GM12878 (cell line): ENCODE measurements at regions of chr10 and their contacts with region 1.

Region 1: DNA sequence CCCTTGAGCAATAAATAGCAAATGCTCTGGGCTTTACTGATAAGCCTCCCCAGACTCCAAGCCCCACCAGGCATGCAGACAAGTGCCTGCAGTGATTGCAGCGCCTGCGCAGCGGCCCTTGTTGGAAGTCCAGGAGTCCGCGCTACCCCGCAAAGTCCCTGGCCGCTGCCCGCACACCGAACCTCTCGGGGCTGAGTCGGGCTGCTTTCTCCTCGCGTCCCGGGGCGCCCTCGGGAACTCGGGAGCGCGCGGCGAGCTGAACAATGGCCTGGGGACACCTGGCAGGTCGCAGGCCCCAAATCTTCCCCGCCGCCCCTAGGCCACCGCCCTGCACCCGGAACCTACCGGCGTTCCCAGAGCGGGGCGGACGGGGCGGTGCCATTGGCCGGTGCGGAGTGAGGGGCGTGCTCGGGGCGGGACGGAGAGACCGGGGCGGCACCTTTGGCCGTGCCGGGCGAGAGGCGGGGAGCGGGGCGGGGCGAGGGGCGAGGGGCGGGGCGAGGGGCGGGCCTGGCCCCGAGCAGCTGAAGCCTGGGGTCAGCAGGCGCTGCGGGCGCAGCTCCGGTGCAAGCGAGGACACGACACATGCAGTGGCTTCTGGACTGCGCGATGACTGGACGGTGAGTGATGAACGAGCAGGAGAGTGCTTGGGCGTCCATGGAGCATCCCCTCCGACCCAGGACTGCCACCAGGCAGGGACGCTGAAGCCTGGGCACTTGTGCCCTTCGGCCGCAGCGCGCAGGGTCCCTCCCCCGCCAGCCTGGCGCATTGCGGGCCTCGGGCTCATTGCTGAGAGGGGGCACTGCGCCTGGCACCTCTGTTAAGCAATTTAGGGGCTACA is at the start of gene RASSF4:
- DNase-seq: no peak
- ATAC-seq: peak; percentile 92
- H3K4me3 ChIP-seq: peak within 1 kb of the TSS; percentile 92
- H3K27ac ChIP-seq: peak within 1 kb of the TSS; percentile 71
- H3K4me1 ChIP-seq: peaks cover 43% of the 10 kb centered on the region
- H3K27me3 ChIP-seq: no peaks in the 10 kb centered on the region
- CTCF ChIP-seq: no peak
- EP300 ChIP-seq: no peak
- POLR2A ChIP-seq: peak; percentile 98
- RAD21 ChIP-seq: no peak
- polyA plus RNA-seq, gene RASSF4: 3.7 to 4.0 TPM

Region 2: GRCh38 chr10:43145311-43145710 is 1814.2 kb before region 1 on chr10:
- CTCF ChIA-PET with region 1: no interaction called
- POLR2A ChIA-PET with region 1: no interaction called
- RAD21 ChIA-PET with region 1: no interaction called
- SMC1A ChIA-PET with region 1: no interaction called
- in situ Hi-C with region 1: loop called (anchors 25 kb)
- intact Hi-C with region 1: loop called (anchors 10 kb)
- DNase-seq: no peak
- ATAC-seq: peak; percentile 5; the same call in 1 of the 3 replicates
- H3K4me3 ChIP-seq: no peak overlapping the region
- H3K27ac ChIP-seq: no peak overlapping the region
- H3K4me1 ChIP-seq: peaks cover 13% of the 10 kb centered on the region
- H3K27me3 ChIP-seq: no peaks in the 10 kb centered on the region
- CTCF ChIP-seq: no peak
- EP300 ChIP-seq: no peak
- POLR2A ChIP-seq: no peak
- RAD21 ChIP-seq: no peak

Region 3: DNA sequence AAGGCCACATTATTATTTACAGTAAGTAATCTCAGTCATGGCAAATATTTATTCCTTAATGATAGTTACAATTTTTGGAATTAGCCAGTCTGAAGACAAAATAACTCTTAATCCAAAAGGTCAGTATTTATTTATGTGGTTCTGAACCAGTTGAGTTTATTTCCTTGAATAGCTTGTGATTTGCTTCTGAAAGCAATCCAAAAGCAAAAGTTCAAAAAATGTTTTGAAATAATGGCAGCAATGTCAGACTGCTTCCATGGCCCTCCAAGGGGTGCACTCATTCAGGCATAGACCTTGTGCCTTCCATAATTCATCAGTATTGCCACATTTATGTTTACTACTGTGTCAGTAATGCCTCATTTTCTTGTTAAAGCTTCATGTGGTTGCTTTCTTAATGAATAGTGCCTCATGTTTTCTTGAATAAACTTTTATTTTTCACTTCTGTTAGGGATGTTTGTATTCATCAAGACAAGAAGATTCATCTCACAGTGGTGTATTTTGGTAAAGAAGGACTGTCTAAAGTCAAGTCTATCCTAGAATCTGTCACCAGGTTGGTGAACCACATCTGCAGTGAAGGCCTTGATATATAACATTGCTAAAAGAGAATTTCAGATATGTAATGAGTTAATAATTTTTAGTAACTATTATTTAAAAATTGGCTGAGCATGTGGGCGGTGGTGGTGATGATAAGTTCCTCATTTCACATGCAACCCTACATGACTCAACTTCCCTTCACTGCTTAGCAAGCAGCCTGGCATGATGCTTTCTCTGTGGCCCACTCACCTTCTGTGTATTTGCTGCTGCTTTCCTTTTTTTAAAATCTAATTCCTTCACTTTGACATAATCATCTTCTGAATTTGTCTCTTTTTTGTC is 1799.2 kb before region 1 on chr10:
- CTCF ChIA-PET with region 1: no interaction called
- POLR2A ChIA-PET with region 1: no interaction called
- RAD21 ChIA-PET with region 1: no interaction called
- SMC1A ChIA-PET with region 1: no interaction called
- in situ Hi-C with region 1: loop called (anchors 25 kb)
- intact Hi-C with region 1: no loop called
- DNase-seq: no peak
- ATAC-seq: peak; percentile 75
- H3K4me3 ChIP-seq: no peak overlapping the region
- H3K27ac ChIP-seq: no peak overlapping the region; the same call in 1 of the 2 replicates
- H3K4me1 ChIP-seq: no peaks in the 10 kb centered on the region; the same call in 1 of the 2 replicates
- H3K27me3 ChIP-seq: no peaks in the 10 kb centered on the region
- CTCF ChIP-seq: no peak
- EP300 ChIP-seq: no peak
- POLR2A ChIP-seq: no peak
- RAD21 ChIP-seq: no peak

Region 4: DNA sequence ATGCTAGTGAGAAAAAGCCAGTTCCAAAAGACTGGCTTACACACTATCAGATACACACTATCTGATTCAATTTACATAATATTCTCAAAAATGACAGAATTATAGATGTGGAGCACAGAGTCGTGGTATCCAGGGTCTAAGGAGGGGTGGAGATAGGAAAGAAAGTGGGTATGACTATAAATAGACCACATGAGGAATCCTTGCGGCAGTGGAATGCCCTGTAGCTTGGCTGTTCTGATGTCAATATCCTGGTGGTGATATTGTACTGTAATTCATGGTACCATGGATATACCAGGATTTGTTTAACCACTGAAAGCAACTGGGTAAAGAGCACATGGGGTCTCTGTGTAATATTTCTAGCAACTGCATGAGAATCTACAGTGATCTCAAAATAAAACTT is 116.0 kb before region 1 on chr10:
- CTCF ChIA-PET with region 1: no interaction called
- POLR2A ChIA-PET with region 1: no interaction called
- RAD21 ChIA-PET with region 1: no interaction called
- SMC1A ChIA-PET with region 1: no interaction called
- in situ Hi-C with region 1: no loop called
- intact Hi-C with region 1: no loop called
- DNase-seq: no peak
- ATAC-seq: no peak
- H3K4me3 ChIP-seq: no peak overlapping the region
- H3K27ac ChIP-seq: no peak overlapping the region
- H3K4me1 ChIP-seq: no peaks in the 10 kb centered on the region
- H3K27me3 ChIP-seq: no peaks in the 10 kb centered on the region; a peak in 3 of 4 replicates
- CTCF ChIP-seq: no peak
- EP300 ChIP-seq: no peak
- POLR2A ChIP-seq: no peak
- RAD21 ChIP-seq: no peak

Region 5: DNA sequence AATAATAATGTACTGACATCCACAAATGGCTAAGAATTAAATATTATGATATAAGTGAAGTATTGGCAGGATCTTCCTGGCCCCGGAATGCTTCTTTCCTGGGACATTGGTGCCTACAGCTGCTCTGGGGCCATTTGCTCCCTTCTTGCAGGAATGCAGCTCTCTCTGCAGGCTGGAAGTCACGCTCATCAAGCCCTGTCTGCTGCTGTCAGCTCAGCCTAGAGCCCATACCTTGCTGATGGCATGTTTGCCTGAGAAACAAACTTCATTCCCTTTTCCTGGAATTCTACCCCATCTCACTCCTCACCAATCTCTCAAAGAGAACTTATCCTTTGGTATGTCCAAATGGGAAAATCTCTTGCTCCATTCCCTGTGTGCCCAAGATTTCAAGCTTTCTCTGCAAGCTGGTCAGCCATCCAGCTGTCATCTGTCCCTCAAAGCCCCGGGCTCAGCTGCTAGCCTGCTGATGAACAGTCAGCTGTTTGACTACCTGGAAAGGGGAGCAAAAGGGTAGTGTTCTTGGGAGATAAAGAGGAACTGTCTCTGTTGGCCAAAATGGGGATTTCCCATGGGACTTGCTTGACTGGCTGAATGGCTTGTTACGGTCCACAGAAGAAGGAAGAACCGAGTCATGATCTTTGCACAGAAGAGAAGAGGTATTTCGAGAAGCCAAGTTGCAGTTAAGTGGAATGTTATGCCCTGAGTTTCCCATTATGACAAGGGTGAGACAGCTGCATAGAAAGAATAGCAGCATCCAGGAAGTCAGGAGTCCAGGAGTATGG is 11.9 kb before region 1 on chr10:
- CTCF ChIA-PET with region 1: interaction called, 80 read pairs
- POLR2A ChIA-PET with region 1: interaction called, 174 read pairs
- RAD21 ChIA-PET with region 1: interaction called, 60 read pairs
- SMC1A ChIA-PET with region 1: interaction called, 147 read pairs
- in situ Hi-C with region 1: no loop called
- intact Hi-C with region 1: loop called (anchors 1 kb)
- DNase-seq: peak; percentile 80
- ATAC-seq: peak; percentile 79
- H3K4me3 ChIP-seq: peak overlapping the region; percentile 16; the same call in 1 of the 2 replicates
- H3K27ac ChIP-seq: peak overlapping the region; percentile 67
- H3K4me1 ChIP-seq: peaks cover 51% of the 10 kb centered on the region
- H3K27me3 ChIP-seq: no peaks in the 10 kb centered on the region
- CTCF ChIP-seq: no peak
- EP300 ChIP-seq: no peak
- POLR2A ChIP-seq: no peak
- RAD21 ChIP-seq: no peak

Region 6: GRCh38 chr10:44974628-44975431 is 15.4 kb after region 1 on chr10:
- CTCF ChIA-PET with region 1: interaction called, 16 read pairs
- POLR2A ChIA-PET with region 1: interaction called, 110 read pairs
- RAD21 ChIA-PET with region 1: interaction called, 124 read pairs
- SMC1A ChIA-PET with region 1: interaction called, 28 read pairs
- in situ Hi-C with region 1: no loop called
- intact Hi-C with region 1: loop called (anchors 2 kb)
- DNase-seq: no peak
- ATAC-seq: peak; percentile 86
- H3K4me3 ChIP-seq: peak overlapping the region; percentile 67; the same call in 1 of the 2 replicates
- H3K27ac ChIP-seq: peak overlapping the region; percentile 80
- H3K4me1 ChIP-seq: peaks cover 50% of the 10 kb centered on the region
- H3K27me3 ChIP-seq: no peaks in the 10 kb centered on the region
- CTCF ChIP-seq: peak; percentile 78 to 95 (median 94); a peak in 5 of 6 replicates
- EP300 ChIP-seq: 0 out of 4 replicates have a peak, but pooled peaks of 1 of the 2 experiments have one; percentile 23
- POLR2A ChIP-seq: peak; percentile 46
- RAD21 ChIP-seq: peak; percentile 79

Region 7: GRCh38 chr10:44981172-44982113 is 22.0 kb after region 1 on chr10:
- CTCF ChIA-PET with region 1: interaction called, 14 read pairs
- POLR2A ChIA-PET with region 1: interaction called, 110 read pairs
- RAD21 ChIA-PET with region 1: interaction called, 124 read pairs
- SMC1A ChIA-PET with region 1: interaction called, 25 read pairs
- in situ Hi-C with region 1: no loop called
- intact Hi-C with region 1: no loop called
- DNase-seq: no peak
- ATAC-seq: peak; percentile 76
- H3K4me3 ChIP-seq: no peak overlapping the region
- H3K27ac ChIP-seq: peak overlapping the region; percentile 47
- H3K4me1 ChIP-seq: peaks cover 39% of the 10 kb centered on the region
- H3K27me3 ChIP-seq: no peaks in the 10 kb centered on the region
- CTCF ChIP-seq: no peak
- EP300 ChIP-seq: no peak
- POLR2A ChIP-seq: no peak
- RAD21 ChIP-seq: no peak

Region 8: GRCh38 chr10:45044290-45044689 is 84.8 kb after region 1 on chr10:
- CTCF ChIA-PET with region 1: no interaction called
- POLR2A ChIA-PET with region 1: no interaction called
- RAD21 ChIA-PET with region 1: no interaction called
- SMC1A ChIA-PET with region 1: no interaction called
- in situ Hi-C with region 1: no loop called
- intact Hi-C with region 1: no loop called
- DNase-seq: no peak
- ATAC-seq: no peak
- H3K4me3 ChIP-seq: no peak overlapping the region
- H3K27ac ChIP-seq: no peak overlapping the region
- H3K4me1 ChIP-seq: no peaks in the 10 kb centered on the region
- H3K27me3 ChIP-seq: no peaks in the 10 kb centered on the region
- CTCF ChIP-seq: no peak
- EP300 ChIP-seq: no peak
- POLR2A ChIP-seq: no peak
- RAD21 ChIP-seq: no peak

Region 9: GRCh38 chr10:45373576-45374349 is 414.3 kb after region 1 on chr10 and contains the start of gene ALOX5:
- CTCF ChIA-PET with region 1: no interaction called
- POLR2A ChIA-PET with region 1: no interaction called
- RAD21 ChIA-PET with region 1: no interaction called
- SMC1A ChIA-PET with region 1: no interaction called
- in situ Hi-C with region 1: no loop called
- intact Hi-C with region 1: loop called (anchors 10 kb)
- DNase-seq: no peak
- ATAC-seq: peak; percentile 63
- H3K4me3 ChIP-seq: peak within 1 kb of the TSS; percentile 81
- H3K27ac ChIP-seq: peak within 1 kb of the TSS; percentile 74
- H3K4me1 ChIP-seq: peaks cover 33% of the 10 kb centered on the region
- H3K27me3 ChIP-seq: no peaks in the 10 kb centered on the region
- CTCF ChIP-seq: no peak
- EP300 ChIP-seq: no peak
- POLR2A ChIP-seq: peak; percentile 49
- RAD21 ChIP-seq: no peak
- polyA plus RNA-seq, gene ALOX5: 3.3 to 6.5 TPM

Region 10: GRCh38 chr10:46318799-46319198 is 1359.3 kb after region 1 on chr10:
- CTCF ChIA-PET with region 1: no interaction called
- POLR2A ChIA-PET with region 1: no interaction called
- RAD21 ChIA-PET with region 1: no interaction called
- SMC1A ChIA-PET with region 1: no interaction called
- in situ Hi-C with region 1: no loop called
- intact Hi-C with region 1: no loop called
- DNase-seq: no peak
- ATAC-seq: no peak
- H3K4me3 ChIP-seq: no peak overlapping the region
- H3K27ac ChIP-seq: no peak overlapping the region
- H3K4me1 ChIP-seq: no peaks in the 10 kb centered on the region
- H3K27me3 ChIP-seq: peaks cover 0 to 6% of the 10 kb centered on the region in 2 experiments; a peak in 3 of 4 replicates
- CTCF ChIP-seq: no peak
- EP300 ChIP-seq: no peak
- POLR2A ChIP-seq: no peak
- RAD21 ChIP-seq: no peak